ENCODE measurements at regions of chrX and their contacts with region 1.

Region 1: DNA sequence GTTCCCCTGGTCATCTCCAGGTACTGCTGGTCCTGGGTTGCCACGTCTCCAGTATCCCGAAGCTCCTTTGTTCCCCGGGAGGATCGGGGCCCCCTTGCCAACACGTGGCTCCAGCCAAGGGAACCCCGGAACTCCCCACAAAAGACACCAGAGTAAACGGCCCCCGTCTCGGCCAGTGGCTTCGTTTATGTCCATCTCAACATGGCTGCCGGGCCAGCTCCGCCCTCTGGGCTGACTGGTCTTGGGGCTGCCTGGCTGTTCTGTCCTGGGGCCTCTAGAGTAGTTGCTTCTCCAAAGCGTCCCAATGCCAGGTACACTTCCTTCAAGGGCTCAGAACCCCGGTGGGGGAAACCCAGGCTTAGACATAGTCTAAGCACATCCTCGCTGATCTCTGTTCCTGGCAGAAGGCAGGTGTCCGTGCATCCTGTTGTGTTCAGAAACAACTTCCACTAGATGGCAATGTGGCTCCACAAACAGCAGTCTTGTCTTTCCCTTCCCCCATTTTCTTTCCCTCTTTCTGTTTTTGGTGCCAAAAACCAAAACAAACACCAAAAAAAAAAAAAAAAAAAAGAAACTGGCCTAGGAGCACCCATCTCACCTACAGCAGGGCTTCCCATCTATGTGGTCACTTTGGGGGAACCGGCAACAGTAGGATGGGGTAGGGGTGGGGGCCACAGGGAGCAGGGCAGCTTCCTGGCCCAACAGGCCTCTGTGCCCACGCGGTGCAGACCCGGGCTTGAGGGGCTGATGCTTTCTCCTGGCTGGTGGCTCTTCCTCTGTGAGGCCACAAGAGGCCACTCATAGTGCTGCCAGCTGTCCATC is 35.3 kb downstream of the NBDY start:
- DNase-seq: peak; percentile 21 to 58
- ATAC-seq: peak; percentile 32 to 76 (median 70)
- H3K4me3 ChIP-seq: peak overlapping the region in 4 of 10 donors; percentile 25 to 62 (median 47)
- H3K27ac ChIP-seq: peak overlapping the region in 7 of 10 donors; percentile 12 to 89 (median 58)
- H3K4me1 ChIP-seq: peaks cover 0 to 49% (median 17%) of the 10 kb centered on the region in 9 donors
- H3K27me3 ChIP-seq: no peaks in the 10 kb centered on the region
- CTCF ChIP-seq: peak in 8 of 9 donors; percentile 27 to 69 (median 52)

Region 2: GRCh38 chrX:56978172-56978571 is 213.8 kb after region 1 on chrX:
- intact Hi-C with region 1: loop called in 3 of 10 experiments (anchors 10 kb)
- DNase-seq: peak in 1 of 2 donors; percentile 5
- ATAC-seq: peak in 4 of 8 donors; percentile 38 to 63 (median 54)
- H3K4me3 ChIP-seq: no peak overlapping the region
- H3K27ac ChIP-seq: no peak overlapping the region
- H3K4me1 ChIP-seq: no peaks in the 10 kb centered on the region
- H3K27me3 ChIP-seq: peaks cover 0 to 48% (median 0%) of the 10 kb centered on the region in 7 donors
- CTCF ChIP-seq: peak; percentile 28 to 71 (median 60)

Region 3: DNA sequence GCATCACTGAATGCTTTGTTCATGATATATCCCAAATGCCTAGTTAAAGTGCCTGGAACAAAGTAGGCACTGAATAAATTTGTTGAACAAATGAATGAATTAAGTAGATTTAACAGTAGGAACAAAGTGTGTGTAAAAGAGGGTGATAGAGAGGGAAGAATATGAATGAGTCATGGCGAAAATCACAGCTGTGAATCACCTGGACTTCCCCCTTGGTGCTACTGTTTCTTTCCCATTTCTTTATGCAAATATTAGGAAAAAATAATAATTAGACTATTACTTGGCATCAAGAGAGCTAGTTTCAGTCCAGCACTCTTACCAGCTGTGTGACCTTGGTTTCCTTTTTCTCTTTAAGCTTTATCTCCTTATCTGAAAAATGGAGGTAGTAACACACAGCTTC is 221.8 kb after region 1 on chrX:
- intact Hi-C with region 1: loop called in 1 of 10 experiments (anchors 10 kb)
- DNase-seq: no peak
- ATAC-seq: no peak
- H3K4me3 ChIP-seq: no peak overlapping the region
- H3K27ac ChIP-seq: no peak overlapping the region
- H3K4me1 ChIP-seq: no peaks in the 10 kb centered on the region
- H3K27me3 ChIP-seq: peaks cover 0 to 63% (median 0%) of the 10 kb centered on the region in 7 donors
- CTCF ChIP-seq: no peak

Region 4: GRCh38 chrX:57121162-57121741 is 356.9 kb after region 1 on chrX and contains the start of gene SPIN2B:
- intact Hi-C with region 1: loop called in 1 of 10 experiments (anchors 10 kb)
- DNase-seq: peak; percentile 79 to 82
- ATAC-seq: peak; percentile 98 to 100 (median 99)
- H3K4me3 ChIP-seq: peak within 1 kb of the TSS; percentile 41 to 75 (median 68)
- H3K27ac ChIP-seq: peak within 1 kb of the TSS; percentile 29 to 89 (median 80)
- H3K4me1 ChIP-seq: peaks cover 0 to 9% (median 0%) of the 10 kb centered on the region in 9 donors
- H3K27me3 ChIP-seq: no peaks in the 10 kb centered on the region
- CTCF ChIP-seq: peak in 3 of 9 donors; percentile 14 to 27 (median 25)
- total RNA-seq, gene SPIN2B: 6.5 to 8.7 (median 7.0) TPM

Measured in heart right ventricle (tissue), 16 donors.